OCI-LY7 (cell line): ENCODE measurements at regions of chr2 and their contacts with region 1.

Region 1: GRCh38 chr2:207710814-207711740 is at the start of gene CCNYL1:
- DNase-seq: peak; percentile 98
- H3K4me3 ChIP-seq: peak within 1 kb of the TSS; percentile 97
- H3K27ac ChIP-seq: peak within 1 kb of the TSS; percentile 57
- H3K4me1 ChIP-seq: peaks cover 22% of the 10 kb centered on the region
- CTCF ChIP-seq: no peak
- total RNA-seq, gene CCNYL1: 4.2 and 8.0 TPM in 2 replicates

Region 2: DNA sequence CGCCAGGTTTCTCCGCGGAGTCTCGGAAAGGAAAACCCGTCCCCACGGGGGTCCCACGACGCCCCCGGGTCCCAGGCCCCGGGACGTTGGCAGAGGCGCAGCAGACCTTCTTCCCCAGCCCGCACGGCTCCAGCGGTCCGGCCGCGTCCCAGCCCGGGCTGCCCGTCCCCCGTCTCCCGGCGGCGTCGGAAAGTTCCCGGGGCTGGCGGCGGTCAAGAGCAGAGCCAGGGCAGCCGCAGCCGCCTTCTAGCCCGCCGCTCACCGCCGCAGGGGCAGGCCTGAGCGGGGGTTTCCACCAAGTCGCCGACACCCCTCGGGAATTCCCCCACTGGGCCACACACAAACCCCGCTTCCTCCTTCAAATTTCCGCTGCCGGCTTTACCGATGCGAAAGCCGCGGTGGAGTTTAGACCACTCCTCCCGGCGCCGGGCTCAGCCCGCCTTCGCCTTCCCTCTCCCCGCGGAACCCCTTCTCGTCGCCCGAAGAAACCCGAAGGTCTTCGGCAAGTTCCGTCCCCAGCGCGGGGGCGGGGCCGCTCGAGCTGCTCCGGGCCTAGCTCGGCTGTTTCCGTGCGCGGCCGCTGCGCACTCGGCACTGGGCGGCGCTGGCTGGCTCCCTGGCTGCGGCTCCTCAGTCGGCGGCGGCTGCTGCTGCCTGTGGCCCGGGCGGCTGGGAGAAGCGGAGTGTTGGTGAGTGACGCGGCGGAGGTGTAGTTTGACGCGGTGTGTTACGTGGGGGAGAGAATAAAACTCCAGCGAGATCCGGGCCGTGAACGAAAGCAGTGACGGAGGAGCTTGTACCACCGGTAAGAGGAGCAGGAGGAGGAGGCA is 181.5 kb before region 1 on chr2 and contains the start of gene CREB1:
- CTCF ChIA-PET with region 1: no interaction called
- POLR2A ChIA-PET with region 1: interaction called, 6 read pairs
- intact Hi-C with region 1: loop called (anchors 1 kb)
- DNase-seq: peak; percentile 96
- H3K4me3 ChIP-seq: peak within 1 kb of the TSS; percentile 97
- H3K27ac ChIP-seq: peak within 1 kb of the TSS; percentile 94
- H3K4me1 ChIP-seq: peaks cover 50% of the 10 kb centered on the region
- CTCF ChIP-seq: peak; percentile 35; the same call in 1 of the 2 replicates
- total RNA-seq, gene CREB1: 40.3 and 54.3 TPM in 2 replicates

Region 3: GRCh38 chr2:207619764-207620203 is 91.3 kb before region 1 on chr2:
- CTCF ChIA-PET with region 1: interaction called, 9 read pairs
- POLR2A ChIA-PET with region 1: interaction called, 10 read pairs
- intact Hi-C with region 1: no loop called
- DNase-seq: peak; percentile 75
- H3K4me3 ChIP-seq: peak overlapping the region; percentile 43
- H3K27ac ChIP-seq: peak overlapping the region; percentile 66
- H3K4me1 ChIP-seq: peaks cover 54% of the 10 kb centered on the region
- CTCF ChIP-seq: no peak

Region 4: GRCh38 chr2:207662203-207662602 is 48.9 kb before region 1 on chr2:
- CTCF ChIA-PET with region 1: no interaction called
- POLR2A ChIA-PET with region 1: interaction called, 17 read pairs
- intact Hi-C with region 1: no loop called
- DNase-seq: peak; percentile 66
- H3K4me3 ChIP-seq: peak overlapping the region; percentile 18
- H3K27ac ChIP-seq: peak overlapping the region; percentile 38
- H3K4me1 ChIP-seq: peaks cover 60% of the 10 kb centered on the region
- CTCF ChIP-seq: no peak

Region 5: DNA sequence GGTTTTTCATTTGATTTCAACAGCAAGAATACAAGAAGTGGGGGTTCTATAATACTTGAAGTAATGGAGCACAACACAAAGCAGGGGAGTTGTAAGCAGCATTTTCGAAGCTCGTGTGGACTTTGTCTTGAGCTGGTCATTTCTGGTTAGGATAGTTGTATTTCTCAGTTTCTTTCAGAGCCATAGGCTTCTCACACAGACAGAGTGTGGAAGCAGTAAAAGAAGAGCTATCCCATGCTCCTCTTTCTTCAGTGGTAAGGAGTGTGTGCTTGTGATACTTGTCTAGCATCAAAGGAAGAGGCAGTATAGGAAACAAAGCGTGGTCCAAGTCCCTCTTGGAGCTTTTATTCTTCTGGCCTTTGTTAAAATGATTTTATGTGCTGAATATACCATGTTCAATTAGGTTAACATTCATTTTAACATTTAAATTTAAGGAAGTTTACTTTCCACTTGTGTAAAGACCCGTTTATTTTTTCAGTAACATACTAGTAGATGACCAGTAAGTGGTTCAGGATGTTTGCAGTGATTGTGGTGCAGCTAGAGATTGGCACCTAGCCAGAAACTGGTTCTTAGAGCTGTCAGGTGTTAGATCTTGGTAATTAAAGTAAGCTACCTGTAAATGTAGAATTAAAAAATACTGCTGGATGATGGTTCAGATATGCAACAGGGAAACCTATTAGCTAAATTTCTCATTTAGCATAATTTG is 14.9 kb after region 1 on chr2:
- CTCF ChIA-PET with region 1: interaction called, 5 read pairs
- POLR2A ChIA-PET with region 1: interaction called, 34 read pairs
- intact Hi-C with region 1: no loop called
- DNase-seq: peak; percentile 42
- H3K4me3 ChIP-seq: no peak overlapping the region
- H3K27ac ChIP-seq: no peak overlapping the region
- H3K4me1 ChIP-seq: peaks cover 37% of the 10 kb centered on the region
- CTCF ChIP-seq: no peak

Region 6: DNA sequence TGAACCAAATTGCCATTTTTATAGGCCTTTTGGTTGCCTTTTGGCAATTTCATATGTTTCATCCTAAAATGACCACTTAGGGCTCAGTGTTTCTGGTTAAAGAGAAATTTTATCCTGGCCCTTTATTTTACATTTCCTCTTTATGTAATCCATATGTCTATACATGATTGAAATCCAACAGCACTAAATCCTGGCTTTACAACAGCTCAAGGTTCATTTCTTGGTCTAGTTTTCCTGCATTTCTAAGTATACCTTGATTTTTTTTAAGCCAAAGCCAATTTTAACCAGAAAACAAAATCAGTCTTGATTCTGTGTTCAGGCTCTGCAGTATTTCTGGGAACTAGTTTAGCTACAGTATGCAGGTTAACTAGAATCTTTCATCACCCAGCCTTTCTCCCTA is 46.9 kb after region 1 on chr2:
- CTCF ChIA-PET with region 1: no interaction called
- POLR2A ChIA-PET with region 1: no interaction called
- intact Hi-C with region 1: no loop called
- DNase-seq: no peak
- H3K4me3 ChIP-seq: no peak overlapping the region
- H3K27ac ChIP-seq: no peak overlapping the region
- H3K4me1 ChIP-seq: peaks cover 6% of the 10 kb centered on the region
- CTCF ChIP-seq: no peak

Region 7: DNA sequence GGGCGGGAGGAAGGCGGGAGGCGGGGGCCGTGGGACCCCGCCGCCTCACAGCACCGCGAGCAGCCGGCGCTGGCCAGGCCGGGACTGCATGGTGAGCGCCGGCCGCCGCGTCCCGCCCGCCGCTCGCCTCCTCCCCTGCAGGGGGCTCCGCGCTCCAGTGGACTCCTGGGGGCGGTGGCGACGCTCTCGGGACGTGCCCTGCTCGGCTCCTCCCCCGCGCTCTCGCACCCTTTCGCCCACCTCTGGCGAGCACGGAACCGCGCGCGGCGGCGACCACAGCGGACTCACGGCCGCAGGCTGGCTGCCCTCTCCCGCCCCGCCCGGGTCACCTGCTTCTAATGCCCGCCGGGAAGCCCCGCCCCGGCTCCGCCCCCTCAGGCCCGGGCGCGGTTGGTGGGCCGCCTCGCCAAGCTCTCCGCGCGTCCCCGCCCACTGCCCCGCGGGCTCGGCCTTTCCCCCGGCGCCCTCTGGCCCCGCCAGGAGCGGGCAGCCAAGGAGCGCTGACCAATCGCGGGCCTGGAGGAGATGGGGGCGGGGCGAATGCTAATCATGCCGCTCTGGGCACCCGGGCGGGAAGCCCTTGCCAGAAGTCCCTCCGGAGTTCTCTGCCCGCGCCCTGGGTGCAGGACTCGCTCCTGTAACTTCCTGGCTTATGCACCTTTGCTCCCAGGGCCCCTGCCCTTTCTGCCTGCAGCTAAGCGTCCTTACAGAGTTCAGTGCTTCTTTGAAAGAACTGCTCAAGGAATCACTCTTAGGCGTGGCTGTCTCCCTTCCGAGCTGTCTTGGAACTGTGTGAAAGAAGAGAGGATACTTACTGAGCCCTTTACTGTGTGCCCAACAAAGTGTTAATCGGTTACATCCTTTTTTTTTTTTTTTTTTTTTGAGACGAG is 58.8 kb after region 1 on chr2 and contains the start of gene FZD5:
- CTCF ChIA-PET with region 1: no interaction called
- POLR2A ChIA-PET with region 1: no interaction called
- intact Hi-C with region 1: loop called (anchors 5 kb)
- DNase-seq: peak; percentile 94
- H3K4me3 ChIP-seq: peak within 1 kb of the TSS; percentile 66
- H3K27ac ChIP-seq: no peak within 1 kb of the TSS
- H3K4me1 ChIP-seq: peaks cover 11% of the 10 kb centered on the region
- CTCF ChIP-seq: peak; percentile 36; the same call in 1 of the 2 replicates
- total RNA-seq, gene FZD5: 1.1 and 1.2 TPM in 2 replicates

Region 8: DNA sequence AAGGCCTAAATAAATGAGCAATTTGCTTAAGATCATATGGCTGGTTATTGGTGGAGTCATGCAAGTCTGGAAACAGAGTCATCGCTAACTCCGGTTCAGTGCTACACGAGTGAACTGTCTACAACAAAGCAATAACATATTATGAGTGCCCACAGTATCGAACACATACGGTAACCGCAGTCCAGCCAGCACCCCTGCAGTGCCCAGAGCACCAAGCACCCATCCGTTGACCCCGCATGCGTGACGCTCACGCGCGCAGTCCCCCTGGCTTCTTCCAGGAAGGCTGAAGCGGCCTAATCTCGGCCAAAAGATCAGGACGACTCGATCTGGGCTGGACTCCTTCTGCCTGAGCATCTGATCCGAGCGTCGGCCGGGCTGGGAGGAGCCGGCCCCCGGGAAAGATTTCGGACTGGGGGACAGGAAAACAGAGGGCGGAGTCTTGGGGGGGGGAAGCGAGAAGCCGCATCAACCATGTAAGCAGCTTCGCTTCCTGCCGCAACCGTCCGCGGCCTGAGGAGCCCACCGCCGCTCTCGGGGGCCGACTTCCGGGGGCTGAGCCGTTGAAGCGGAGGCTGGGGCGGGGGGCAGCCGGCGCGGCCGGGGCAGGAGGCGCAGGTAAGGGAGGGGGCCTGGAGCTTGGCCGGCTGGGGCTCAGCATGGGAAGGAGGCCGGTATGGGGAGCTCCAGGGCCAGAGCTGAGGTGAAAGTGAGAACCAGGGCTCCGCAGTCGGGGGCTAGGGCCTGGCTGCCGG is 554.9 kb after region 1 on chr2 and contains the start of gene PIKFYVE:
- CTCF ChIA-PET with region 1: no interaction called
- POLR2A ChIA-PET with region 1: no interaction called
- intact Hi-C with region 1: loop called (anchors 5 kb)
- DNase-seq: peak; percentile 98
- H3K4me3 ChIP-seq: peak within 1 kb of the TSS; percentile 74
- H3K27ac ChIP-seq: peak within 1 kb of the TSS; percentile 93
- H3K4me1 ChIP-seq: peaks cover 37% of the 10 kb centered on the region
- CTCF ChIP-seq: no peak
- total RNA-seq, gene PIKFYVE: 29.2 and 29.7 TPM in 2 replicates